Colonic mucosa (tissue), 4 donors: ENCODE measurements at regions of chr18 and their contacts with region 1.

Region 1: GRCh38 chr18:12947355-12948041 is at the start of gene SEH1L:
- DNase-seq: peak; percentile 100
- H3K4me3 ChIP-seq: peak within 1 kb of the TSS; percentile 59
- H3K27ac ChIP-seq: peak within 1 kb of the TSS; percentile 92
- H3K4me1 ChIP-seq: no peaks in the 10 kb centered on the region
- H3K27me3 ChIP-seq: no peaks in the 10 kb centered on the region
- CTCF ChIP-seq: no peak
- total RNA-seq, gene SEH1L: 35.1 to 55.6 TPM

Region 2: DNA sequence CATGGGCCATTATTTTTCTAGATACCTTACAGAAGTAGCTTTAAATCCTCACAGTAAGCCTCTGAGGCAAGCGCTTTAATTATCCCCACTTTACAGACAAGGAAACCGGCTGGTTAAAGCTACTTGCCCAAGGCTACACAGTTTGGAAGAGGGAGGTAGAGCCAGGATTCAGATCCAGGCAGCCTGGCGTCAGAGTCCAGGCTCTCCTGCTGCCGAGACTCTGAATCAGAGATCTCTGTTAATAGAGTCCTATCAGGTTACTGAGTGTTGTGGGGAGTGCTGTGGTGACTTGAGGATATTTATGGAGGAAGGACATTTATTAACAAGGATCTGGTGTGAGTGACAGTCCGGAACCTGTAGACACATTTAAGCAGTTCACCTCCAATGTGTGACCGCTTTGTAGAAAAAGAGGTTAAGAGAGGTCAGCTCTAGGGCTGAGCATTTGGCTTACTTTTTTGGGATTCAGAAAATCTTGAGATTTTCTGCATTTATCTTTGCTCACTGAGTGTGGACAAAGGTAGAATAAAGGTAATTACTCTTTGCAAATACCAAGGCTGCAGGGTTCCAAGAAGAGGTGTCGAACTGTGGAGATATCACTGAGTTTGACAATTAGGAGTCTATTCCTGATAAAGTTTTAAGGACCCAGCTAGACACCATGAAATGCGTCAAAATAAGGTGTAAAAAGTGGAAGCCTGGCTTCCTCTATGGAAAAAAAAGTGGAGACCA is 42.1 kb after region 1 on chr18:
- intact Hi-C with region 1: loop called (anchors 5 kb)
- DNase-seq: no peak
- H3K4me3 ChIP-seq: no peak overlapping the region
- H3K27ac ChIP-seq: no peak overlapping the region
- H3K4me1 ChIP-seq: peaks cover 4% of the 10 kb centered on the region
- H3K27me3 ChIP-seq: no peaks in the 10 kb centered on the region
- CTCF ChIP-seq: no peak